Activated naive CD4-positive, alpha-beta T cell treated with anti-CD3 and anti-CD28 coated beads for 36 hours (primary cell): ENCODE measurements at regions of chr11 and their contacts with region 1.

Region 1: DNA sequence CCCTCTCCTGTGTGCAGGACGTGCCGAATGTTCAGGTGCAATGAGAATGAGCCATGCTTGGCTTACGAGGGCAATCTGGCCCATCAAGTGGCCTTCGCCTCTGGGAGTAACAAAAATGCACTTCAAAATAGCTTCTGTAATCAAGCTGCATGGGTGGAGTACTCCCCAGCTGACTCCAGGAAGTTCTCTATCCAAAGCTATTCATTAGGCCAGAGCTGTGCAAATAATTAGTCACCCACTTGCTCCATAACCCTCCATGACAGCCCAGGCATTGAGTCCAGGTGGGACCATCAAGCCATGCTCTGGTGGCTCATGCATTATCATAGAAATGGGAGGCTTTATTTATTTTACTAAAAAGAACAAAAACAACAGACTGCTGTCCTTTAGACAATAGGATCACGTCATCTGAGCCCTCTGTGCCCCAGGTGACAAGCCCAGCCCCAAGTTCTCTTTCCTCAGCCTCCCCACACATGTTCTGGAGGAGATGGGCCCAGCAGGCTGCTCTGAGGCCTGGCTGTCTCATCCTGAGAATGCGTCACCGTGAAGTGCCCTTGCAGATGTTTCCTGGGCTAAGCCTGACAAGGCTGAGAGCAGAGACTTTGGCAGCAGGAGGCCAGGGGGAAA is 244.7 kb downstream of the ETS1 start:
- DNase-seq: peak; percentile 93
- H3K4me3 Mint-ChIP-seq: peak overlapping the region; percentile 73
- H3K27ac Mint-ChIP-seq: peak overlapping the region; percentile 89
- H3K4me1 Mint-ChIP-seq: peaks cover 93% of the 10 kb centered on the region
- H3K27me3 Mint-ChIP-seq: no peaks in the 10 kb centered on the region

Region 2: GRCh38 chr11:128021349-128022006 is 321.1 kb before region 1 on chr11:
- CTCF ChIA-PET with region 1: no interaction called
- intact Hi-C with region 1: no loop called
- DNase-seq: no peak
- H3K4me3 Mint-ChIP-seq: no peak overlapping the region
- H3K27ac Mint-ChIP-seq: no peak overlapping the region
- H3K4me1 Mint-ChIP-seq: peaks cover 5% of the 10 kb centered on the region
- H3K27me3 Mint-ChIP-seq: no peaks in the 10 kb centered on the region

Region 3: GRCh38 chr11:128195057-128195751 is 147.4 kb before region 1 on chr11:
- CTCF ChIA-PET with region 1: no interaction called
- intact Hi-C with region 1: loop called (anchors 1 kb)
- DNase-seq: peak; percentile 77
- H3K4me3 Mint-ChIP-seq: peak overlapping the region; percentile 6
- H3K27ac Mint-ChIP-seq: peak overlapping the region; percentile 32
- H3K4me1 Mint-ChIP-seq: peaks cover 42% of the 10 kb centered on the region
- H3K27me3 Mint-ChIP-seq: no peaks in the 10 kb centered on the region

Region 4: DNA sequence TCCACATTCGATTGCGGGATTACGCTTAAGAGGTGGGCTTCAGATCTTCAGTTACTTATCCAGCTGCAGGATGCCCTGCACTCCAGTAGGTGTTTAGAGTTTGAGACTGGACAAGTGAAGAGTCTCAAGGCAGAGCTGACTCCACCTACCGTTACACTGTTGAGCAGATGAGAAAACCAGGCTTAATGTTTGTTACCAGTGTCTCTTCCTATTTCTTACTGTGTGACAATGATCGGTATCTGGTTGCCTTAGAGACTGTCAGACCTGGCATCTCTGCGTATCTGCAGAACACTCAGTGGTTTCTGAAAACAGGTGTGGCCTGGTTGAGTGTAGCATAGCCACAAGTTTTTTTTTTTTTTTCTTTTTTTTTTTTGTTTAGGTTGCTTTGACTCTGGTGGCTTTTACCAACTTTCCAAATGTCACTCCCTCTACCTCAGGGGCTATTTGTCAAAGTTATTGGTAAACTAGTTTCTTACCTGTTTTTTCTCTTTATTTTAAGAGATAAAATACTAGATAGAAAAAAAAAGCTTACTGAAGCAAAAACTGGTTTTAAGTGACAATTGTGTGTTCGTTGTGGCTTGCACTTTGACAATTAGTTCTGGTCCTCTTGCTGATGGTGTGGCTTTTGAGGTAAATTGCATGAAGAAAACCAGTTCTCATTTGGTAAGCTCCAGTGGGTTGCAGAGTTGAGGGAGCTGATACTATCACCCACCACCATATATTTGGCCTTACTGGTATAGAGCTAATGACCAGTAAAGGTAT is 40.0 kb before region 1 on chr11:
- CTCF ChIA-PET with region 1: interaction called, 4 read pairs
- intact Hi-C with region 1: loop called (anchors 1 kb)
- DNase-seq: peak; percentile 79
- H3K4me3 Mint-ChIP-seq: peak overlapping the region; percentile 74
- H3K27ac Mint-ChIP-seq: peak overlapping the region; percentile 93
- H3K4me1 Mint-ChIP-seq: peaks cover 80% of the 10 kb centered on the region
- H3K27me3 Mint-ChIP-seq: no peaks in the 10 kb centered on the region

Region 5: DNA sequence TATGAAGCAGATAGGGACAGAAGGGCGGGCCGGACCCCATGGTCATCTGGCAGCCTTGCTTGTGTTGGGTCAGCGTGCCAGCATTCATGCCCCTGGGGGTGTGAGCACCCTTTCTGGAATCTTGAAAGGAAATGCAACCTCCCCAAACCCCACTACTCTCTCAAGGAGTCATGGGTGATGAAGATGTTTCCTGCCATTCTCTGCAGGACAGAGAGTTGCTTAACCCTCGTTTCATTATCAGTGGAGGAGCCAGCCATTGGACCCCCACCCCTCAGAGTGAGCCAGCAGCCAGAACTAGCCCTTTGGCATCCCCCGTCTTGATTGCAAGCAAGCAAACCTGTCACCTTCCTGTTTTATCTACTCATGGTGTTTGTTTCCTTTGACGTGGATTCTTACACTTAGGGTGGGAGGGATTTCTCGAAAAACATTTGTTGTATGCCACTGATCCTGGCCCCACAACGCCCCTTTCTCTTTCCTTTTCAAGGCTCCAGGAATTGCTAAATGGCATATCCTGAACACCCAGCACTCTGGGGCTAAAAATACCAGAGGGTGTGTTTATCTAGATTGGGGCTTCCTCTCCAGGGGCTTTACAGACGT is 13.6 kb before region 1 on chr11:
- CTCF ChIA-PET with region 1: interaction called, 25 read pairs
- intact Hi-C with region 1: loop called (anchors 1 kb)
- DNase-seq: peak; percentile 85
- H3K4me3 Mint-ChIP-seq: peak overlapping the region; percentile 33
- H3K27ac Mint-ChIP-seq: peak overlapping the region; percentile 92
- H3K4me1 Mint-ChIP-seq: peaks cover 72% of the 10 kb centered on the region
- H3K27me3 Mint-ChIP-seq: no peaks in the 10 kb centered on the region

Region 6: GRCh38 chr11:128379587-128380580 is 37.3 kb after region 1 on chr11:
- CTCF ChIA-PET with region 1: no interaction called
- intact Hi-C with region 1: loop called (anchors 1 kb)
- DNase-seq: peak; percentile 56
- H3K4me3 Mint-ChIP-seq: no peak overlapping the region
- H3K27ac Mint-ChIP-seq: peak overlapping the region; percentile 61
- H3K4me1 Mint-ChIP-seq: peaks cover 37% of the 10 kb centered on the region
- H3K27me3 Mint-ChIP-seq: no peaks in the 10 kb centered on the region

Region 7: GRCh38 chr11:128422576-128423370 is 80.2 kb after region 1 on chr11:
- CTCF ChIA-PET with region 1: no interaction called
- intact Hi-C with region 1: loop called (anchors 1 kb)
- DNase-seq: peak; percentile 96
- H3K4me3 Mint-ChIP-seq: peak overlapping the region; percentile 44
- H3K27ac Mint-ChIP-seq: peak overlapping the region; percentile 75
- H3K4me1 Mint-ChIP-seq: peaks cover 63% of the 10 kb centered on the region
- H3K27me3 Mint-ChIP-seq: no peaks in the 10 kb centered on the region